ENCODE measurements at regions of chr7 and their contacts with region 1.

Region 1: GRCh38 chr7:18426564-18427226 is 68.9 kb upstream of the HDAC9 start:
- DNase-seq: peak; percentile 86
- ATAC-seq: peak; percentile 84
- H3K4me3 ChIP-seq: no peak overlapping the region
- H3K27ac ChIP-seq: peak overlapping the region; percentile 86
- H3K4me1 ChIP-seq: peaks cover 47% of the 10 kb centered on the region
- H3K27me3 ChIP-seq: no peaks in the 10 kb centered on the region
- CTCF ChIP-seq: no peak

Region 2: DNA sequence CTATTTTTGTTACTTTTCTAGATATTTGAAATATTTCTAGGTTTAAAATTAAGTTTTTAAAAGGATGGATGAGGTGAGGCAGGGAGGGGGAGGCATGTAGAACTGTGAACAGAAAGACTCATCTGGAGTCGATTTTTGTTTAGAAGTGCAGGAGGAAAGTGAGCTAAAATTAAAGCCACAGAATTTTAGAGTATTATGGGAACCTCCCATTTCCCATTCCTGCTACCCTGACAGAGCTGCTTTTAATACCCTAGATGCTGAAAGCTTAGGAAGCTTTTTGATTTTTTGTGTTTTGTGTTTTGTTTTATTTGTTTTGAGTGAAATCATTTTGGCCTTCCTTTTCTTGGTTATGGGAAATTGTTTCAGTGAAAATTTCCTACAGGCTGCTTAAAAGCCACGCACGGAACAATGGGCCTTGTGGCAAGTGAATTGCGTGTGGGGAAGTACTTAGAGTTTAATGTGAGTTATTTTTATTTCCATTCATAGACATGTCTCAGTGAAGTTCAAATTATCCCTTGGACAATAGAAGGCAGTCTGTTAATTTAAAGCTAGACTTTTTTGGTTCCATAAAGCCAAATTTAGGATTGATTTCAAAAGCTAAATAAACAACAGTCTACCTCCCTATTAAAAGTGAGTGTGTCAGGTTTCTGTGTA is 33.1 kb before region 1 on chr7:
- CTCF ChIA-PET with region 1: no interaction called
- POLR2A ChIA-PET with region 1: no interaction called
- intact Hi-C with region 1: loop called (anchors 1 kb)
- DNase-seq: no peak
- ATAC-seq: no peak
- H3K4me3 ChIP-seq: no peak overlapping the region
- H3K27ac ChIP-seq: no peak overlapping the region
- H3K4me1 ChIP-seq: peaks cover 17% of the 10 kb centered on the region
- H3K27me3 ChIP-seq: no peaks in the 10 kb centered on the region
- CTCF ChIP-seq: no peak

Region 3: DNA sequence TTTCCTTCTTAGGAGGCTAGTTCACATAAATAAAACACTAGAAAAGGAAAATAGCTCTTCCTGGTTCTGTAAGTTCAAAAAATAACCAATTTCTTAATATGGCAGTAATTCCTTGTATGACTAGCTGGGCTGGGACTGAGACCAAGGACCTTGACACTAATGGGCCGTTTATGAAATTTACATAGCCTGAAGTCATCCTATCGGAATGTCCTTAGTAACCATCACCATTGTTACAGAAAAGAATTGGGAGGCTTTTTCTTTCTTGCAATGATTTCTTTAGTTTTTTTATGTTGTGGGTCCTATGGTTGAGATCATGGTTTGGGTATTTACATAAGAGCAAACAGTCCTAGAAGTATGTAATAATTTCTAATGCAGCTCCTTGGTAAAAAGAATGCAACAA is 18.2 kb before region 1 on chr7:
- CTCF ChIA-PET with region 1: no interaction called
- POLR2A ChIA-PET with region 1: no interaction called
- intact Hi-C with region 1: loop called (anchors 2 kb)
- DNase-seq: peak; percentile 86
- ATAC-seq: peak; percentile 98
- H3K4me3 ChIP-seq: no peak overlapping the region
- H3K27ac ChIP-seq: peak overlapping the region; percentile 49
- H3K4me1 ChIP-seq: peaks cover 27% of the 10 kb centered on the region
- H3K27me3 ChIP-seq: no peaks in the 10 kb centered on the region
- CTCF ChIP-seq: no peak

Region 4: DNA sequence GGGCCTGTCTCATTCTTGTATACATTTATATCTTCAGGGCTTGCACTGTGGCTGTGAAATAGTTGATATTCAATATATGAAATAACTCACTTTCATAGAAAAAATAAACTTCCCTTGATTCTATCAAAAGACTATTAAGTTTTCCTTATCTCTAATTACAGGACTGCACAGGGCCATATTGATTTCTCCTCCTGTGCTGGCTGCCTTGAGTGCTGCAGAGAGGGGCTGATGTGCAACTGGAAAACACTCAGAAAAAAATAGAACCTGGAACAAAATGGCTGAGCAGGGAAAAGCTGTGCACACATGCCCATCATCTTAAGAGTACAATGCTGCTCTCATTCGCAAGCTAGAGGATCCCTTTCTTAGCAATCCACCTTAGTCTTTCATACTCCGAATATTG is 62.9 kb after region 1 on chr7:
- CTCF ChIA-PET with region 1: no interaction called
- POLR2A ChIA-PET with region 1: no interaction called
- intact Hi-C with region 1: loop called (anchors 2 kb)
- DNase-seq: no peak
- ATAC-seq: no peak
- H3K4me3 ChIP-seq: no peak overlapping the region
- H3K27ac ChIP-seq: no peak overlapping the region
- H3K4me1 ChIP-seq: peaks cover 10% of the 10 kb centered on the region; the same call in 1 of the 2 replicates
- H3K27me3 ChIP-seq: no peaks in the 10 kb centered on the region
- CTCF ChIP-seq: no peak

Region 5: GRCh38 chr7:18508443-18509427 is 82.0 kb after region 1 on chr7:
- CTCF ChIA-PET with region 1: interaction called, 5 read pairs
- POLR2A ChIA-PET with region 1: no interaction called
- intact Hi-C with region 1: loop called (anchors 1 kb)
- DNase-seq: peak; percentile 92
- ATAC-seq: peak; percentile 92
- H3K4me3 ChIP-seq: peak overlapping the region; percentile 73
- H3K27ac ChIP-seq: peak overlapping the region; percentile 99
- H3K4me1 ChIP-seq: peaks cover 38% of the 10 kb centered on the region
- H3K27me3 ChIP-seq: no peaks in the 10 kb centered on the region
- CTCF ChIP-seq: no peak

Region 6: GRCh38 chr7:18552943-18553584 is 126.4 kb after region 1 on chr7:
- CTCF ChIA-PET with region 1: no interaction called
- POLR2A ChIA-PET with region 1: no interaction called
- intact Hi-C with region 1: loop called (anchors 2 kb)
- DNase-seq: peak; percentile 80
- ATAC-seq: peak; percentile 82
- H3K4me3 ChIP-seq: peak overlapping the region; percentile 50
- H3K27ac ChIP-seq: peak overlapping the region; percentile 90
- H3K4me1 ChIP-seq: peaks cover 58% of the 10 kb centered on the region
- H3K27me3 ChIP-seq: no peaks in the 10 kb centered on the region
- CTCF ChIP-seq: no peak

Measured in PC-3 (cell line).